ENCODE measurements at regions of chr7 and their contacts with region 1.

Region 1: DNA sequence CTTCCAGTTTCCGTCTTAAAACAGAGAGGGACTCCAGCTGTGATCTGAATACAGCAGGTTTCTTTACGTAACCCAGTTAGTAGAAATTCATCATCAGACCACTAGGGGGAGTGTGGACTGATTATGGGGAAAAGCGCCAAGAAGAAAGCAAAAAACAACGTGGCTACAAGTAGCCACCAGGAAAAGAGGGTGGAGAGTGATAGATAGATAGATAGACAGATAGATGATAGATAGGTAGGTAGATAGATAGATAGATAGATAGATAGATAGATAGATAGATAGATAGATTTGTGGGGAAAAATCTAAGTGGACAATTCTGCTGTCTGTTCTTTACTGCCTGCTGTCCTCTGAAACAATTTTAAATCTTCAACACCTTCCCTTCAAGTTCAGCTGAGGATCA is 12.7 kb upstream of the AKR1B10 start:
- DNase-seq: no peak
- H3K4me3 ChIP-seq: no peak overlapping the region
- H3K27ac ChIP-seq: no peak overlapping the region
- H3K4me1 ChIP-seq: no peaks in the 10 kb centered on the region
- H3K27me3 ChIP-seq: peaks cover 0 to 3% (median 0%) of the 10 kb centered on the region in 4 experiments; a peak in 2 of 7 replicates
- CTCF ChIP-seq: peak in 2 of 3 experiments; percentile 71 to 72; a peak in 3 of 4 replicates
- EP300 ChIP-seq: no peak
- POLR2A ChIP-seq: no peak
- RAD21 ChIP-seq: peak; percentile 47 to 65

Region 2: GRCh38 chr7:134438946-134439345 is 75.7 kb before region 1 on chr7:
- CTCF ChIA-PET with region 1: interaction called, 108 read pairs
- POLR2A ChIA-PET with region 1: no interaction called
- DNase-seq: no peak
- H3K4me3 ChIP-seq: no peak overlapping the region
- H3K27ac ChIP-seq: no peak overlapping the region
- H3K4me1 ChIP-seq: no peaks in the 10 kb centered on the region
- H3K27me3 ChIP-seq: no peaks in the 10 kb centered on the region; a peak in 1 of 7 replicates
- CTCF ChIP-seq: no peak
- EP300 ChIP-seq: no peak
- POLR2A ChIP-seq: no peak
- RAD21 ChIP-seq: no peak

Region 3: DNA sequence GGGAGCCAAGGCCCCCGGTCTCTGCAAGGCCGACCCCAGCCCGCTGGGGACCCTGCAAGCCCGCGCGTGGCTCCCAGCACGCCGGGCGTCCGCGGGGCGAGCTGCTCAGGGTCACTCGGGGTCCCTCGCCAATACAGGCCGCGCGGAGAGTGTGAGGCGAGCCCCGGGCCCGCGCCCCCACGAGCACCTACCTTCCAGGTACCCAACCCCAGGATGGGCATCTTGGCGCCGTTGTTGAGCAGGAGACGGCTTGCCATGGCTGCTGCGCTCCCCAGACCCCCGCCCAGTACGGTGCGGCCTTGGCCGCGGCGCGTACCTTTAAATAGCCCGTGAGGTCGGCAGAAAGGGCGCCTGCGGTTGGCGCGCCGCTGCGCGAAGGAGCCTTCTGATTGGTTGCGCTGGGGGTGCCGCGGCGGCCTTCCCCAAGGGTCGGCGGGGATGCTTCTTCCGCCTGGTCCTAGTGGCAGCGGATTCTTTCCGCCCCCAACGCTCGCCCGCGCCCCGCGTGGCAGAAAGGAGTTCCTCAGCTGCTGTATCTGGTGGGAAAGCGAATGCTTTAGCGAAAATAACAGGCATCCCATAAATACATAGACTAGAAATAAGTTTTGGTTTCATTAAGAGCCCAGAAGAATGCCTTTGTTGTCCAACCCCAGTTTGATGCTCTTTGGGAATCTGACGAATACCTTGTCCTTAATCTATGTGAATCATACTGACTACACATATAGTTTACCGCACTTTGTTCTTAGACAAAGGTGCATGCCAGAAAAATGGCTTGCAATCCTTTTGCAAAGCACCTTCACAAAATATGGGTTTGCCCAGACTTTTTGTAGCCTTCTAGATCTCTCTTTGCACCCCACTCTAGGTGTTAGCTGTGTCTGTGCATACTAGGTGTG is 55.6 kb before region 1 on chr7 and contains the start of gene AKR1B1:
- CTCF ChIA-PET with region 1: interaction called, 40 read pairs
- POLR2A ChIA-PET with region 1: interaction called, 3 read pairs
- DNase-seq: peak; percentile 74 to 93
- H3K4me3 ChIP-seq: peak within 1 kb of the TSS; percentile 83 to 92 (median 87)
- H3K27ac ChIP-seq: no peak within 1 kb of the TSS; the same call in 1 of the 2 replicates
- H3K4me1 ChIP-seq: peaks cover 0 to 4% (median 1%) of the 10 kb centered on the region in 4 experiments; a peak in 4 of 7 replicates
- H3K27me3 ChIP-seq: peaks cover 0 to 2% (median 0%) of the 10 kb centered on the region in 4 experiments; a peak in 2 of 7 replicates
- CTCF ChIP-seq: peak; percentile 44 to 55 (median 48)
- EP300 ChIP-seq: 0 out of 3 replicates have a peak, but pooled peaks of 1 of the 2 experiments have one; percentile 7
- POLR2A ChIP-seq: peak; percentile 60 to 89
- RAD21 ChIP-seq: no peak; a peak in 1 of 4 replicates
- total RNA-seq, gene AKR1B1: 189 and 195 TPM in 2 replicates

Region 4: DNA sequence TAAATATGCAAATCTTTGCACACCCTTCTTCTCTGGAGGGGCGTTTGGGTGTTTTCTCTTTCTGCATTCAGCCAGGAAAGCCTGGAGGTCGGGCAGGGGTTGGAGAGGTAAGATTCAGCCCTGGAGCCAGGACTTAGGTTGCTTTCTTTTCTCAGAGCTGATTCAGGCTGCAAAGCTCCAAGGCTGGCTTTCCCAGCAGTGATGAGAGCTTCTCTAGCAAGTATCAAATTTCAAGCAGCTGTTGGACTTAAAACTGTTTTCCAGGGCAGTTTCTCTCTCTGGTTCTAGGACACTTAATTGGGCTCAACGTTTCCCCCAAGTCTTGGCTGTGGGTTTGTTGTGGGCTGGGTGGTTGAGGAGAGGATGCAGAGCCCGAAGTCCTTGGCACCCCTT is 13.3 kb after region 1 on chr7:
- CTCF ChIA-PET with region 1: interaction called, 17 read pairs
- POLR2A ChIA-PET with region 1: no interaction called
- DNase-seq: no peak
- H3K4me3 ChIP-seq: no peak overlapping the region
- H3K27ac ChIP-seq: no peak overlapping the region
- H3K4me1 ChIP-seq: peaks cover 0 to 5% (median 1%) of the 10 kb centered on the region in 4 experiments; a peak in 2 of 7 replicates
- H3K27me3 ChIP-seq: no peaks in the 10 kb centered on the region; a peak in 1 of 7 replicates
- CTCF ChIP-seq: no peak
- EP300 ChIP-seq: no peak
- POLR2A ChIP-seq: no peak
- RAD21 ChIP-seq: no peak

Region 5: GRCh38 chr7:134547397-134548054 is 32.9 kb after region 1 on chr7:
- CTCF ChIA-PET with region 1: interaction called, 33 read pairs
- POLR2A ChIA-PET with region 1: interaction called, 4 read pairs
- DNase-seq: peak; percentile 49 to 80
- H3K4me3 ChIP-seq: peak overlapping the region; percentile 22 to 58 (median 48)
- H3K27ac ChIP-seq: peak overlapping the region; percentile 36; the same call in 1 of the 2 replicates
- H3K4me1 ChIP-seq: peaks cover 8 to 14% (median 9%) of the 10 kb centered on the region in 4 experiments
- H3K27me3 ChIP-seq: no peaks in the 10 kb centered on the region; a peak in 1 of 7 replicates
- CTCF ChIP-seq: peak; percentile 45 to 76 (median 49); a peak in 3 of 4 replicates
- EP300 ChIP-seq: no peak
- POLR2A ChIP-seq: no peak
- RAD21 ChIP-seq: peak; percentile 30 to 37; a peak in 2 of 4 replicates

Region 6: GRCh38 chr7:134605973-134606923 is 91.6 kb after region 1 on chr7:
- CTCF ChIA-PET with region 1: interaction called, 12 read pairs
- POLR2A ChIA-PET with region 1: no interaction called
- DNase-seq: peak in 1 of 2 experiments; percentile 68
- H3K4me3 ChIP-seq: no peak overlapping the region
- H3K27ac ChIP-seq: no peak overlapping the region
- H3K4me1 ChIP-seq: no peaks in the 10 kb centered on the region
- H3K27me3 ChIP-seq: peaks cover 0 to 3% (median under 1%) of the 10 kb centered on the region in 4 experiments; a peak in 3 of 7 replicates
- CTCF ChIP-seq: peak; percentile 69 to 79 (median 70)
- EP300 ChIP-seq: no peak
- POLR2A ChIP-seq: no peak
- RAD21 ChIP-seq: peak; percentile 84 to 87

Measured in H1 (cell line).